Activated T-helper 1 cell treated with anti-CD3 and anti-CD28 coated beads, Interleukin-12 subunit alpha, Interleukin-12 subunit beta, Interleukin-2, Interleukin-4 antibody, amounts not matched to agents 30 ng/mL and 10 ng/mL and 1 ng/mL, durations not matched to agents 14 hours and 24 hours and 36 hours (primary cell): ENCODE measurements at regions of chrX and their contacts with region 1.

Region 1: GRCh38 chrX:12894074-12895030 is 12.1 kb upstream of the TLR8 start:
- DNase-seq: peak; percentile 31
- H3K4me3 Mint-ChIP-seq: no peak overlapping the region
- H3K27ac Mint-ChIP-seq: no peak overlapping the region
- H3K4me1 Mint-ChIP-seq: peaks cover 53% of the 10 kb centered on the region
- H3K27me3 Mint-ChIP-seq: peaks cover 4% of the 10 kb centered on the region

Region 2: GRCh38 chrX:12080265-12080664 is 814.1 kb before region 1 on chrX:
- intact Hi-C with region 1: loop called (anchors 10 kb)
- DNase-seq: no peak
- H3K4me3 Mint-ChIP-seq: no peak overlapping the region
- H3K27ac Mint-ChIP-seq: no peak overlapping the region
- H3K4me1 Mint-ChIP-seq: no peaks in the 10 kb centered on the region
- H3K27me3 Mint-ChIP-seq: peaks cover 3% of the 10 kb centered on the region

Region 3: DNA sequence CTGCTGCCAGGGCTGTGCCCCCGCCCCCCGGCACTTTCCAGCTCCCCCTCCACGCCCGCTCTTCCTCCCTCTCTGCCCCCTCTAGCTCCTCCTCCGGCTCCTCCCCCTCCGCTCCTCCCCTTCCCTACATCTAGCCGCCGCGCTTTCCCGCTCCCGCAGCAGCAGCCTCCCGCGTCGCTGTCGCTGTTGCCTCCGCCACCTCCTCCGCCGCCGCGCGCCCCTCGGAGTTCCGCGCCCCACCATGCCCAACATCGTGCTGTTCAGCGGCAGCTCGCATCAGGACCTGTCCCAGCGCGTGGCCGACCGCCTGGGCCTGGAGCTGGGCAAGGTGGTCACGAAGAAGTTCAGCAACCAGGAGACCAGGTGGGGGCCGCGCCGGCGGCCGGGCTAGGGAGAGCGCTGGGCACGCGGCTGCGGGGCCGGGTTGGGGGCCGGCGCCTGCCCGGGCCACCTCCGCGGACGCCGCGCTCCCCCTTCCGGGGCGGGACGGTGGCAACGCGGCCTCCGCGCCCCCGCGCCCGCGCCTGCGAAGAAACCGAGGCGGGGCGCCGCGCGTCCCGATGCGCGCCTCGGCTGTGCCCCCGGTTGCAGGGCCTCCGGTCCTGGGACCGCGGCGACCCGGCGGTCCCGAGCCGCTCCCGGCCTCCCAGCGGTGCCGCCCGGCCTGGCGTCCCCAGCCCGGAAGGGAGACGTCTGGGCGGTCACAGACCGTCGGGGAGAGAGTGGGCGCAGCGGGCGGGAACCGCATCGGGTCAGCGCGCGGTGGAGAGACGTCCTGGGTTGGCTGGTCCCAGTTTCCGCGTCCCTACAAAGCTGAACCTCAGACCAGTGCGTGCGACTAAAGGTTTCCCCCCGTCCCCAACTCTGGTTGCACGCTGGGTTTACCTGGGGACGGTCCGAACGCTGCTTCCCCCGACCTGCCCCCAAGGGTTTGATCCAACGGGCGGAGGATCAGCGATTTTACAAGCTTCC is 102.8 kb before region 1 on chrX and contains the start of gene PRPS2:
- intact Hi-C with region 1: loop called (anchors 5 kb)
- DNase-seq: peak; percentile 62
- H3K4me3 Mint-ChIP-seq: peak within 1 kb of the TSS; percentile 88
- H3K27ac Mint-ChIP-seq: peak within 1 kb of the TSS; percentile 76
- H3K4me1 Mint-ChIP-seq: peaks cover 41% of the 10 kb centered on the region
- H3K27me3 Mint-ChIP-seq: peaks cover 8% of the 10 kb centered on the region
- total RNA-seq, gene PRPS2: 115 and 116 TPM in 2 replicates

Region 4: GRCh38 chrX:12814420-12814819 is 79.9 kb before region 1 on chrX:
- intact Hi-C with region 1: loop called (anchors 1 kb)
- DNase-seq: peak; percentile 32
- H3K4me3 Mint-ChIP-seq: no peak overlapping the region
- H3K27ac Mint-ChIP-seq: no peak overlapping the region
- H3K4me1 Mint-ChIP-seq: peaks cover 34% of the 10 kb centered on the region
- H3K27me3 Mint-ChIP-seq: no peaks in the 10 kb centered on the region